ENCODE measurements at regions of chr20 and their contacts with region 1.

Region 1: GRCh38 chr20:20568604-20569205 is 143.7 kb downstream of the RALGAPA2 start:
- DNase-seq: peak; percentile 7
- H3K4me3 ChIP-seq: no peak overlapping the region
- CTCF ChIP-seq: peak; percentile 62

Region 2: DNA sequence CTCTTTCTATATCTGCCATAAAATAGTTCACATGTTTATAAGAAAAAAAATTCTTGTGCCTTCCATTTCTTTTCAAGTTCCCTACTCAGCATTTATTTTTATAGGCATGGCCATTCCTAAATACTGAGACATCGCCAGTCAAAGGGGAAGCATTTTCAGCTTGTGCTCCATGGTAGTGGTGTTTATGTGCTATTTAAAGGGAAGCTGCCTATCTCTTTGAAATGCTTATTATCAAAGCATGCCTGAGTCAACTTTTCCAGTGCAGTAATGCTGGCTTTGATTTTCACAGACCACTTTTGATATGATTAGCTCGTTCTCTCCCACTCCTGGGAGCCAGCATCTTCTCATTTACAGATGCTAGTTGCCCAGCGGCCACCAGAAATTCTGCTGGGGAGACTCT is 934.7 kb before region 1 on chr20:
- CTCF ChIA-PET with region 1: no interaction called
- POLR2A ChIA-PET with region 1: no interaction called
- DNase-seq: peak; percentile 41
- H3K4me3 ChIP-seq: no peak overlapping the region
- CTCF ChIP-seq: no peak

Region 3: DNA sequence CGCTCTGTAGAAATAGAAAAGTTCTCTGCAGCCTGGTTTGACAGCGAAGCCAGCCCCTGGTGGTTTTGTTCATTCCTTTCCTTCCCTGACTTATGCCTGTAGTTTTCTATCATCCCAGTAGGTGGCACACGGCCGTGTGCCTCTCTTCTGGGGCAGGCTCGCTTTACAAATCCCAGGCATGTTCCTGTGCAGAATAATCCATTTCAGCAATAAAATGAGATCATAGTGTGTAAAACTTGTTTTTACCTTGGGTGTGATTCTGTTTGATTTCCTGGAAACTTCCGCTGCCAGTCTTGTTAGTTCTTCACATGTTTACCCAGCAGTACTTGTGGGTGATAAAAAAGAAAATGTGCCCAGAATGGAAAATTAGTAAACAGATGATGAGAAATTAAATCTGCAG is 208.2 kb before region 1 on chr20:
- CTCF ChIA-PET with region 1: interaction called, 67 read pairs
- POLR2A ChIA-PET with region 1: no interaction called
- DNase-seq: peak; percentile 17
- H3K4me3 ChIP-seq: no peak overlapping the region
- CTCF ChIP-seq: peak; percentile 76

Region 4: DNA sequence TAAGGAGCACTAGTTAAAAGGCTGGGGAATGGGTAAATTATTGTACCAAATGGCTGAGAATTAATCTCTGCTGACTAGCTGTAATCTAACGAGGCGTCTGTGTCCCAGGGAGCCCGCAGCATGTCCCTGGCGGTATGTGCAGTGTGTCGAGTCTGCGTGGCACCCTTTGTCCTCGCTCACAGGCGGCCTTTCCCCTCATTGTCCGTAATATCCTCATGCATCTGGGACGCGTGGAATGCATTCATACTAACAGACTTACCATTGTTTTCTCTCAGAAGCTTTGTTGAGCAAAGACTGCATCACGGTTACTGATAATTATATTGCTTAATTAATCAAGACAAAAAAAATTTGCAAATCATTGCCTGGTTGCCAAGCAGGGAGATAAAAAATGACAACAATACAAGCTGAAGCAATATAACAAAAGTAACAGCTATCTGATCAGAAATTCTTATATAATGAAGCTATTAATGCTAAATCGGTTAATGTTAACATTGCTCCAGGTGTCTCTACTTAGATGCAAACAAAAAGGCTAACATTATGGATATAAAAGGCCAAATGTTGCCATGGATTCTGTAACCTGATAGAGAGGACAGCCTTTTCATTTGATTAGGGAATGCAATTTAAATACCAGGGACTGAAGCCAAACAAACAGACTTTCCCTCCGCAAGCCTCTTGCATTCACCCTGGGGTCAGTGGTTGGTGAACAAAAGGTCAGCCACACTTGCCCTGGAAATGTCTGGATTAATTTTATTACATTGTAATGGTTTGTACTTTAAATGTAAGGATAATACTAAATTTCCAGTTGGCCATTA is 76.0 kb before region 1 on chr20:
- CTCF ChIA-PET with region 1: no interaction called
- POLR2A ChIA-PET with region 1: no interaction called
- DNase-seq: no peak
- H3K4me3 ChIP-seq: no peak overlapping the region
- CTCF ChIP-seq: no peak